CD8-positive, alpha-beta T cell (primary cell): ENCODE measurements at regions of chr17 and their contacts with region 1.

Region 1: GRCh38 chr17:39153599-39154051 is 2.2 kb upstream of the PLXDC1 start:
- DNase-seq: peak; percentile 82 to 99 (median 94)
- ATAC-seq: peak; percentile 54
- H3K4me3 ChIP-seq: peak overlapping the region; percentile 98 to 100
- H3K4me3 Mint-ChIP-seq: peak overlapping the region; percentile 100
- H3K27ac ChIP-seq: peak overlapping the region; percentile 60 to 68
- H3K27ac Mint-ChIP-seq: peak overlapping the region; percentile 98
- H3K4me1 ChIP-seq: peaks cover 42% of the 10 kb centered on the region
- H3K4me1 Mint-ChIP-seq: peaks cover 46% of the 10 kb centered on the region
- H3K27me3 ChIP-seq: no peaks in the 10 kb centered on the region
- H3K27me3 Mint-ChIP-seq: peaks cover 4% of the 10 kb centered on the region
- CTCF ChIP-seq: no peak

Region 2: DNA sequence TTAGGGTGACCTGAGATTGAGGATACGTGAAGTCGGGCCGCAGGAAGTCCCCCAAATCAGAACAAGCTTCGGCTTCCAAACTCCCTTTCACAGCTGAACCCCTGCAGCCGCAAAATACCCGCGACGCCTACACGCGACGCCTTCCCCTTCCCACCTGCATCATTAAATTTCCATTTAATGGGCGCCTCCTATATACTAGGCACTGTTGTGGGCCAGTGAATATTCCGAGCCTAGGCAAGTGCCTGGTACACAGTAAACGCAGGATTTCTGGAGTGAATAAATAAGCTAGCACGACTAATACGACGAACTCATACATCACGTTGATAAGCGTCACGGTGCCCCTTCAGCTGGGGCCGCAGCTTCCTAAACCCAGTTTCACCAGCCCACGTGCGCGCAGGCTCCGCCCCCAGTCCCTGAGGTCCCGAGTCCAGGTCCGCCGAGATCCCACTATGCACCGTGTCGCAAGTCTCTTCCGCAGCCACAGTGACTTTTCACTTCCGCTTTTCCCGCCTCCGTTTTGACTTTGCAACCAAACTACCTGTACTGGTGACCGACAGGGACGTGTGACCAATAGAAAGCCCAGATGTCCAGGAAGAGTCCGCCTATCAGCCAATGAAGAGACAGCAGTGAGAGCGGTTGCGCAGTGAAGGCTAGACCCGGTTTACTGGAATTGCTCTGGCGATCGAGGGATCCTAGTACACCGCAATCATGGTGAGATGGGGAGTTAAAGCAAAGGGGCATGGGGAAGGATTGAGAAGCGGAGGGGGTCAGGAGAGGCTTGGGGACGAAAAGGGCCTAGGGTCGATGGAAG is 401.3 kb before region 1 on chr17 and contains the start of gene PSMB3:
- CTCF ChIA-PET with region 1: interaction called, 6 read pairs
- POLR2A ChIA-PET with region 1: no interaction called
- intact Hi-C with region 1: loop called (anchors 2 to 5 kb)
- DNase-seq: peak; percentile 90 to 100 (median 95)
- ATAC-seq: peak; percentile 87
- H3K4me3 ChIP-seq: peak within 1 kb of the TSS; percentile 88 to 99
- H3K4me3 Mint-ChIP-seq: peak within 1 kb of the TSS; percentile 96
- H3K27ac ChIP-seq: peak within 1 kb of the TSS; percentile 70 to 85
- H3K27ac Mint-ChIP-seq: peak within 1 kb of the TSS; percentile 97
- H3K4me1 ChIP-seq: peaks cover 53% of the 10 kb centered on the region
- H3K4me1 Mint-ChIP-seq: peaks cover 54% of the 10 kb centered on the region
- H3K27me3 ChIP-seq: peaks cover 21 to 31% of the 10 kb centered on the region in 2 experiments
- H3K27me3 Mint-ChIP-seq: peaks cover 19% of the 10 kb centered on the region
- CTCF ChIP-seq: no peak
- total RNA-seq, gene PSMB3: 53.6 to 64.2 TPM

Region 3: DNA sequence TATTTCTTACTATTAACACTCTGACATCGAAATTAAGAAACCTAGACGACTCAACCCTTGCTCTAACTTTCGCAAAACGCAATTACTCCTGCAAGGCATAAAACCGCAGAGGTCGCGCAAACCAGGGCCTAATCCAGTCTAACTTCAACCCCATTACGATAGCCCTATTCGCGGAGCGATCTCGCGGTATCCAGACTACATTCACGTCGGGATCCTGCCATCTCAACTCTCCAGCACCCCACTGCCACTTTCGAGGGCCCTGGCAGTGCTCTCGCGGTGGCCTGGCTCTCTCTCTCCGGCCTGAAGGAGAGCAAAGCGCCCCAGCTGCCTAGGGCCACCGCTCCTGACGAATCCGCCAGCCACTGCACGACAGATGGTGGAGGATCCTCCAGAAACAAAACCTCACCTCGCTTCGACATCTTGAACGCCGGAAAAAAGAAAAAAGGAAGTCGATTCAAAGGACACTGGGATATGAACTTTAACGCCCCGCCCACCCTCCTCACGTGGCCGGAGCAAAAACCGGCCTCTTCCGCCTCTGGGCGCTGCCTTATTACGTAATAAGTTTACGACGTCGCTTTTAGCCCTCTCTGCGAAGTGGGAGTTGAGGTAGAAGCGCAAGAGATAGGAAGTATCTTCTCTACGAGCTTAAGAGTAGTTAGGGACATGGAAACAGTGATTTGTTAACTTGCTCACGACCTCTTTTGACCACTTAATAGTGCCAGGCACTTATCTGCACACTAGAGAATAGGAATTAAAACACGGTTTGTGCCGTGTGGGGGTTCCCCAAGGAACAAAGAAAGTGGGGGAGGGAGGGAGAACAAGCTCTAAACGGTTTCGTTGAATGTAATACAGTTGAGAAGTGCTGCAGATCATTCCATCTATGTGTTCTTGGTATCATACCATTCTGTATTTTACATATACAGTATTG is 300.1 kb before region 1 on chr17 and contains the start of gene RPL23:
- CTCF ChIA-PET with region 1: interaction called, 3 read pairs
- POLR2A ChIA-PET with region 1: interaction called, 16 read pairs
- intact Hi-C with region 1: loop called (anchors 5 kb)
- DNase-seq: peak; percentile 78 to 98 (median 91)
- ATAC-seq: peak; percentile 78
- H3K4me3 ChIP-seq: peak within 1 kb of the TSS; percentile 56 to 74
- H3K4me3 Mint-ChIP-seq: peak within 1 kb of the TSS; percentile 93
- H3K27ac ChIP-seq: peak within 1 kb of the TSS; percentile 84 to 94
- H3K27ac Mint-ChIP-seq: peak within 1 kb of the TSS; percentile 99
- H3K4me1 ChIP-seq: peaks cover 22% of the 10 kb centered on the region
- H3K4me1 Mint-ChIP-seq: peaks cover 46% of the 10 kb centered on the region
- H3K27me3 ChIP-seq: no peaks in the 10 kb centered on the region
- H3K27me3 Mint-ChIP-seq: no peaks in the 10 kb centered on the region
- CTCF ChIP-seq: no peak
- total RNA-seq, gene RPL23: 2,036 to 2,052 TPM

Region 4: DNA sequence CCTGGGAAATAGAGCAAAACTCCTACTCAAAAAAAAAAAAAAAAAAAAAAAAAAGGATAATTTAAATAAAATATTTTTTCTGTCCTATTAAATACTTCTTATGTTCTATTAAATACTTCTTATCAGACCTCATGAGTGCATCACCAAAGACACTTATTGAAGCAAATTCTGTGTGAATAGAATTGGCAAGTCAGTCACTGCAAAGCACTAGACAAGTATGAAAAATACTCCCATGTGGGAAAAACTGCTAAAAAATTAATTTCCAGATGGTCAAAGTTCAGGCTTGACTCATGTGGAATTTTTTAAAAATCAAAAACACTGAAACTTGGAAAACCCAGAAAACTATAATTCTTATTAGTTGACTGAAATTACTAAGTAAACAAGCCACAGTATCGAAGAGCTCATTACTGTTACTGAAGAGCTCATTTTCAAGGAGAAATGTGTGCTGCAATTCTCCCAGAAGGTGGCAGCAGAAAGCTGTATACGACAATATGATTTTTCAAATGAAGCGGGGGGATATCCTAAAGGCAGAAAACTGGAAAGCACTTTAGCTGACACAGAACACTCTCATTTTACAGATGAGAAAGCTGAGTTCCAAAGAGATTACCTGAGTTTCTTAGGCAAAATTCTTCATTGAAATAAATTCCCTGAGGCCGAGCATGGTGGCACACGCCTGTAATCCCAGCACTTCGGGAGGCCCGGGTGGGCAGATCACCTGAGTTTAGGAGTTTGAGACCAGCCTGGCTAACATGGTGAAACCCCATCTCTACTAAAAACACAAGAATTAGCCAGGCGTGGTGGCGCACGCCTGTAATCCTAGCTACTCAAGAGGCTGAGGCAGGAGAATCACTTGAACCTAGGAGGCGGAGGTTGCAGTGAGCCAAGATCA is 170.5 kb before region 1 on chr17:
- CTCF ChIA-PET with region 1: interaction called, 182 read pairs
- POLR2A ChIA-PET with region 1: interaction called, 29 read pairs
- intact Hi-C with region 1: loop called (anchors 1 kb)
- DNase-seq: peak in 8 of 9 experiments; percentile 16 to 82 (median 55)
- ATAC-seq: peak; percentile 84
- H3K4me3 ChIP-seq: no peak overlapping the region
- H3K4me3 Mint-ChIP-seq: no peak overlapping the region
- H3K27ac ChIP-seq: no peak overlapping the region
- H3K27ac Mint-ChIP-seq: no peak overlapping the region
- H3K4me1 ChIP-seq: no peaks in the 10 kb centered on the region
- H3K4me1 Mint-ChIP-seq: peaks cover 2% of the 10 kb centered on the region
- H3K27me3 ChIP-seq: no peaks in the 10 kb centered on the region
- H3K27me3 Mint-ChIP-seq: no peaks in the 10 kb centered on the region
- CTCF ChIP-seq: peak; percentile 72

Region 5: DNA sequence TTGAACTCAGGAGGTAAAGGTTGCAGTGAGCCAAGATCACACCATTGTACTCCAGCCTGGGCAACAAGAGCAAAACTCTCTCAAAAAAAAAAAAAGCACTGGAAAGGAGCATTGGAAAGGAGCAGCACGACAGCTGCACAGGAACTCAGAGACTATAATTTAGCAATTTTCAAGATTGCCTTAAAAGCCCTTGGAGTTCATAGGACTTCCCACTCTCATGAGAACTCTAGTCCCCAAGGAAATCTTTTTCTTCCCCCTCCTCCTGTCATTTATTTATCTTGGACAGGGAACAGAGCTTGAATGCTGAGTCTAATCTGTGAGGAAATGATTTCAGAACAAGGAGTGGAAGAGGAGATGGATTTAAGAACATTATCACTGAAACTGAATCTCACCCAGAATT is 71.1 kb before region 1 on chr17:
- CTCF ChIA-PET with region 1: interaction called, 28 read pairs
- POLR2A ChIA-PET with region 1: interaction called, 4 read pairs
- intact Hi-C with region 1: no loop called
- DNase-seq: no peak
- ATAC-seq: no peak
- H3K4me3 ChIP-seq: no peak overlapping the region
- H3K4me3 Mint-ChIP-seq: no peak overlapping the region
- H3K27ac ChIP-seq: no peak overlapping the region
- H3K27ac Mint-ChIP-seq: no peak overlapping the region
- H3K4me1 ChIP-seq: no peaks in the 10 kb centered on the region
- H3K4me1 Mint-ChIP-seq: no peaks in the 10 kb centered on the region
- H3K27me3 ChIP-seq: no peaks in the 10 kb centered on the region
- H3K27me3 Mint-ChIP-seq: no peaks in the 10 kb centered on the region
- CTCF ChIP-seq: no peak

Region 6: DNA sequence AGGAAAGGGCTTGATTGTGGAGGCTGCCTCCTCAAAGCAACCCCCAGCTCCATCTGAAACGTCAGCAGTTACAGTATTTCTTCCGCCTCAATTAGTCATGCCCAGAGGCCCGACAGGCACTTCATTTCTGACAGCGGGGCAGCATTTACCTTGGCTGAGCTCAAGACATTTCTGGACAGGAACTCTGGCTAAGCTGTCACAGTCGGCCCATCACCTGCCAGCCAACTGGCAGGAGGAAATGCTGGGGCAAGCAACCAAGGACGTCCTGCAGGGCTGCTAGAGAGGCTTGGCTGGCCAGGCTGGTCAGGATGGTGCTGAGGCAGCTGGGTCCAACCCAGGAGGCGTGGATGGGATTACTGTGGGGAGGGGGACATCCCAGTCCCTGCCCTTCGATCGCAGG is 30.0 kb before region 1 on chr17:
- CTCF ChIA-PET with region 1: interaction called, 11 read pairs
- POLR2A ChIA-PET with region 1: no interaction called
- intact Hi-C with region 1: no loop called
- DNase-seq: no peak
- ATAC-seq: no peak
- H3K4me3 ChIP-seq: no peak overlapping the region
- H3K4me3 Mint-ChIP-seq: no peak overlapping the region
- H3K27ac ChIP-seq: no peak overlapping the region
- H3K27ac Mint-ChIP-seq: no peak overlapping the region
- H3K4me1 ChIP-seq: no peaks in the 10 kb centered on the region
- H3K4me1 Mint-ChIP-seq: peaks cover 6% of the 10 kb centered on the region
- H3K27me3 ChIP-seq: no peaks in the 10 kb centered on the region
- H3K27me3 Mint-ChIP-seq: no peaks in the 10 kb centered on the region
- CTCF ChIP-seq: no peak

Region 7: DNA sequence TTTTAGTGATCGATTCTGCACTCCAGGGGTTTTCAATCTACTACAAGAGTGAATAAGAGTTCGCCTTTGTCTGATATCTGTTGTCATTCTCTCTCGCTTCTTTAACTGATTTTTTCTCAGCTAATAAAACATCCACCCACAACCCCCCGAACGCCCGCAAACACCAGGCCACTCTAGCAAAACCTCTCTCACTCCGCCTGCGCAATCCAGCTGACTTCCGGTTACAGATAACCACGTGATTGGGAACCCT is 46.1 kb after region 1 on chr17:
- CTCF ChIA-PET with region 1: no interaction called
- POLR2A ChIA-PET with region 1: interaction called, 8 read pairs
- intact Hi-C with region 1: loop called (anchors 1 to 2 kb)
- DNase-seq: peak; percentile 70 to 96 (median 86)
- ATAC-seq: peak; percentile 61
- H3K4me3 ChIP-seq: peak overlapping the region; percentile 77 to 87
- H3K4me3 Mint-ChIP-seq: peak overlapping the region; percentile 95
- H3K27ac ChIP-seq: peak overlapping the region; percentile 94 to 98
- H3K27ac Mint-ChIP-seq: peak overlapping the region; percentile 100
- H3K4me1 ChIP-seq: peaks cover 56% of the 10 kb centered on the region
- H3K4me1 Mint-ChIP-seq: peaks cover 69% of the 10 kb centered on the region
- H3K27me3 ChIP-seq: no peaks in the 10 kb centered on the region
- H3K27me3 Mint-ChIP-seq: no peaks in the 10 kb centered on the region
- CTCF ChIP-seq: no peak